ENCODE measurements at regions of chr1 and their contacts with region 1.

Region 1: GRCh38 chr1:154145986-154146385 is 8.9 kb downstream of the NUP210L start:
- DNase-seq: no peak
- H3K4me3 ChIP-seq: no peak overlapping the region
- H3K27ac ChIP-seq: no peak overlapping the region
- H3K4me1 ChIP-seq: peaks cover 6% of the 10 kb centered on the region; the same call in 1 of the 2 replicates
- H3K27me3 ChIP-seq: no peaks in the 10 kb centered on the region
- CTCF ChIP-seq: peak; percentile 67

Region 2: GRCh38 chr1:154019269-154019668 is 126.7 kb before region 1 on chr1:
- CTCF ChIA-PET with region 1: no interaction called
- POLR2A ChIA-PET with region 1: interaction called, 10 read pairs
- intact Hi-C with region 1: no loop called
- DNase-seq: no peak
- H3K4me3 ChIP-seq: no peak overlapping the region
- H3K27ac ChIP-seq: no peak overlapping the region
- H3K4me1 ChIP-seq: no peaks in the 10 kb centered on the region
- H3K27me3 ChIP-seq: no peaks in the 10 kb centered on the region
- CTCF ChIP-seq: no peak

Region 3: GRCh38 chr1:154176337-154176736 is 30.4 kb after region 1 on chr1:
- CTCF ChIA-PET with region 1: no interaction called
- POLR2A ChIA-PET with region 1: no interaction called
- intact Hi-C with region 1: no loop called
- DNase-seq: no peak
- H3K4me3 ChIP-seq: no peak overlapping the region
- H3K27ac ChIP-seq: no peak overlapping the region
- H3K4me1 ChIP-seq: peaks cover 20% of the 10 kb centered on the region
- H3K27me3 ChIP-seq: no peaks in the 10 kb centered on the region
- CTCF ChIP-seq: no peak

Region 4: DNA sequence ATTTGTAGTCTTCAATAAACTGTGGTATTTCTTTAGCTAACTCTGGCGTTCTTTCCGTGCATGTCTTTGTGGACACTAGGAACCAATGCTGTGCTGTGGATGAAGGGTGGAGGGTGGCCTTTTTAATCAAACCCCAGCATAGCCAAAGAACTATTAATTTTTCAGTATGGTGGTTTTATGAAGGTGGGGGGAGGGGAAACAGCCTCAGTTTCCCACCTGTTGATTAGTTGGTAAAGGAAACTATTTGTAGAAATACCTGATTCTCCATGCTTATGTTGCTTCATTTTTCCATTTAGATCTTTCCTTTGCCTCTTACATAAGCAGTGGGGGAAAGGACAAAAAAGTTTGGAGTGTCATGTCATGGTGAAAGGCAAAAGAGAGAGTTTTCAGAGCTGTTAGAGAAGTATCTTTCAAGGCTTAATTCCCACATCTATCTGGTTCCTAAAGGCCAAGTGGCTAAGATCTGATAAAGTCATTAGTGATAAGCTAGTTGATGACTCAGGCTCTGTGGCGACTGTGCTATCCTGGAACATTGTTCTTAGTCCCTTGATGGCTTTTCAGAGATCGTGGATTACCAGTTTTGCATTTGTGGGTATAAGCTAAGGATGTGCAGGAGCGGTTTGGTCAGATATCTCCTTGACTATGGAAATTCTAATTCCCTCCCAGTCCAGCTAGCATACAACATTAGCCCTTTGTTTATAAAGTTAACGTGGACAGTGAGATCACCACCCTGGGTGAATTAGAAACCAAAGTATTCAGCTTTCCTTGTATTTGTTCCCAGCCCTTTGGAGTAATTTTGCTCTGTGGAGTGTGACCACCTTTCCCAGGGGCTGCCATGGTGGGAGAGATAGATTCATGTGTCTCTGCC is 117.7 kb after region 1 on chr1:
- CTCF ChIA-PET with region 1: no interaction called
- POLR2A ChIA-PET with region 1: interaction called, 28 read pairs
- intact Hi-C with region 1: no loop called
- DNase-seq: no peak
- H3K4me3 ChIP-seq: no peak overlapping the region
- H3K27ac ChIP-seq: no peak overlapping the region
- H3K4me1 ChIP-seq: no peaks in the 10 kb centered on the region
- H3K27me3 ChIP-seq: no peaks in the 10 kb centered on the region
- CTCF ChIP-seq: no peak

Region 5: GRCh38 chr1:154445040-154445472 is 299.1 kb after region 1 on chr1:
- CTCF ChIA-PET with region 1: no interaction called
- POLR2A ChIA-PET with region 1: no interaction called
- intact Hi-C with region 1: no loop called
- DNase-seq: no peak
- H3K4me3 ChIP-seq: no peak overlapping the region
- H3K27ac ChIP-seq: no peak overlapping the region
- H3K4me1 ChIP-seq: peaks cover 5% of the 10 kb centered on the region; the same call in 1 of the 2 replicates
- H3K27me3 ChIP-seq: no peaks in the 10 kb centered on the region
- CTCF ChIP-seq: no peak

Region 6: GRCh38 chr1:154479764-154480421 is 333.9 kb after region 1 on chr1:
- CTCF ChIA-PET with region 1: no interaction called
- POLR2A ChIA-PET with region 1: no interaction called
- intact Hi-C with region 1: no loop called
- DNase-seq: peak; percentile 65 to 71
- H3K4me3 ChIP-seq: no peak overlapping the region
- H3K27ac ChIP-seq: no peak overlapping the region
- H3K4me1 ChIP-seq: 0 out of 2 replicates have a peak, but pooled peaks cover 12% of the 10 kb centered on the region
- H3K27me3 ChIP-seq: no peaks in the 10 kb centered on the region
- CTCF ChIP-seq: peak; percentile 97